Activated CD4-positive, alpha-beta memory T cell treated with anti-CD3 and anti-CD28 coated beads for 36 hours (primary cell): ENCODE measurements at regions of chr16 and their contacts with region 1.

Region 1: GRCh38 chr16:71610936-71611871 is 14.8 kb upstream of the MARVELD3 start:
- DNase-seq: peak; percentile 85
- H3K4me3 Mint-ChIP-seq: no peak overlapping the region
- H3K27ac Mint-ChIP-seq: no peak overlapping the region
- H3K4me1 Mint-ChIP-seq: peaks cover 9% of the 10 kb centered on the region
- H3K27me3 Mint-ChIP-seq: peaks cover 19% of the 10 kb centered on the region

Region 2: DNA sequence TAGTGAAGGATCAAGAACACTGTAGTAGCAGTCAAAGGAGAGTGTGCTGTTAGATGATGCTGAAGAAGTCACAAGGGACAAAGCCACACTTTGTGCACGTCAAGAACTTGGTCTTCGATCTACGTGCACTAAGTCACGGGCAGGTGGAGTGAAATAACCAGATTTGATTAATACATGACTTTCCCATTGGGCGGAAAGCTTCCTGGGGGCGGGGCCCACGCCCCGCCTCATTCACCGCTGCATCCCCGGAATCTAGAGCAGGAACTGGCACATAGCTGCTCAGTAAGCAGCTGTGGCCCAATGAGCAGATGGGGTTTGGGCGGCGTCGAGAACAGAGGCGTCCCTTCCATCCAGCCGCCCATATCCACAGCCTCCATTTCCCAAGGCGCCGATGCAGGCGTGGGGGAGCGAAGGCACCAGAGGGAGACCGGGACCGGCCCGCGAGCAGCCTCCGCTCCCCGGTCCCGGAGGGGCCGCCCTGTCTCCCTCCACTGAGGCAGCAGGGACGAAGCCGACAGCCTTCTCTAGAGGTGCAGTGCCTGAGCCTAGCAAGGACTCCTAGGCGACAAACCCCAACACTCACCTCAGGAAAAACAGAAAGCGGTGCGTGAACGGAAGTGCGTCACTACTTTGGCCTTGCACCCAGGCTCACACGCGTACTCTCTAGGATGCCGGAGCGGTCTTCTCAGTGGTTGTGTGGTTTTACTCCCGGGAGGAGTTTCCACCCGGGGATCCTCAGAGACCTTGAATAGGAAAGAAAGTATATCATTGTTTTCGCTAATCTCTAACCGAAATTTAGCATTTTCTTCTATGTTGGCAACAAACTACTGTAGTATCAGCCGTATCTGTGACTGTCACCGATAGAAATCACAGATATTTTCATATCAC is 127.0 kb before region 1 on chr16:
- CTCF ChIA-PET with region 1: interaction called, 5 read pairs
- POLR2A ChIA-PET with region 1: no interaction called
- intact Hi-C with region 1: loop called (anchors 2 kb)
- DNase-seq: peak; percentile 89
- H3K4me3 Mint-ChIP-seq: peak overlapping the region; percentile 81
- H3K27ac Mint-ChIP-seq: peak overlapping the region; percentile 74
- H3K4me1 Mint-ChIP-seq: peaks cover 13% of the 10 kb centered on the region
- H3K27me3 Mint-ChIP-seq: no peaks in the 10 kb centered on the region

Region 3: DNA sequence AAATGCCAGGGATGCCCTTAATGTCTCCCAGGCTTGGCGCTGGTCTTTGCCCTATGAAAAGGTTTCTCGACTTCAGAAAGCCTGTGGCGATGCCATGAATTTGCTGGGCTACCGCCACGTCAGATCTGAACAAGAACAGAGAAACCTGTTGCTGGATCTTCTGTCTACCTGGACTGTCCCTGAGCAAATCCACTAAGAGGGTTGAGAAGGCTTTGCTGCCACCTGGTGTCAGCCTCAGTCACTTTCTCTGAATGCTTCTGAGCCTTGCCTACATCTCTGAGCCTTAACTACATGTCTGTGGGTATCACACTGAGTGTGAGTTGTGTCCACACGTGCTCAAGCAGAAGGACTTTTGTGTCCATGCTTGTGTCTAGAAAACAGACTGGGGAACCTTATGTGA is 73.6 kb before region 1 on chr16:
- CTCF ChIA-PET with region 1: interaction called, 22 read pairs
- POLR2A ChIA-PET with region 1: no interaction called
- intact Hi-C with region 1: loop called (anchors 1 kb)
- DNase-seq: peak; percentile 58
- H3K4me3 Mint-ChIP-seq: no peak overlapping the region
- H3K27ac Mint-ChIP-seq: no peak overlapping the region
- H3K4me1 Mint-ChIP-seq: peaks cover 4% of the 10 kb centered on the region
- H3K27me3 Mint-ChIP-seq: peaks cover 6% of the 10 kb centered on the region

Region 4: GRCh38 chr16:71572497-71573116 is 38.6 kb before region 1 on chr16:
- CTCF ChIA-PET with region 1: interaction called, 97 read pairs
- POLR2A ChIA-PET with region 1: no interaction called
- intact Hi-C with region 1: no loop called
- DNase-seq: no peak
- H3K4me3 Mint-ChIP-seq: no peak overlapping the region
- H3K27ac Mint-ChIP-seq: no peak overlapping the region
- H3K4me1 Mint-ChIP-seq: no peaks in the 10 kb centered on the region
- H3K27me3 Mint-ChIP-seq: peaks cover 10% of the 10 kb centered on the region

Region 5: GRCh38 chr16:71622088-71622487 is 10.9 kb after region 1 on chr16:
- CTCF ChIA-PET with region 1: interaction called, 30 read pairs
- POLR2A ChIA-PET with region 1: no interaction called
- intact Hi-C with region 1: no loop called
- DNase-seq: no peak
- H3K4me3 Mint-ChIP-seq: no peak overlapping the region
- H3K27ac Mint-ChIP-seq: no peak overlapping the region
- H3K4me1 Mint-ChIP-seq: peaks cover 7% of the 10 kb centered on the region
- H3K27me3 Mint-ChIP-seq: peaks cover 5% of the 10 kb centered on the region

Region 6: DNA sequence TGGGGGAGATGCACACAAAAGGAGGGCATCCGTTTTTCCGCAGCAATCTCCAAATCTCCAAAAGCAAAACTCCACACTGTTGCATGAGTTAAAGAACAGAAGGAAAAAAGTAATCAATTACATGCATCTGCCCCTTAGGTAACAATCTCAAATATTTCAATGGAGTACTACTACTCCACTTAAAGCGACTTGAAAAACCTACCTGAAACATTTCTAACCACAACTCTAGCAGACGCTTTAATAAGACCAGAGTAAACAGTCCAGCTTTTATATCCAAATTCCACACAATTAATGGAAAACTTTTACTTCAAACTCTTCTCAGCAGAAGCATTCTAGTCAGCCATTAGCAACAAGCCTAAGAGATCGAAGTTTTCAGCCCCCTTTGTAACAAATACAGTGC is 167.6 kb after region 1 on chr16:
- CTCF ChIA-PET with region 1: no interaction called
- POLR2A ChIA-PET with region 1: no interaction called
- intact Hi-C with region 1: no loop called
- DNase-seq: no peak
- H3K4me3 Mint-ChIP-seq: no peak overlapping the region
- H3K27ac Mint-ChIP-seq: no peak overlapping the region
- H3K4me1 Mint-ChIP-seq: peaks cover 43% of the 10 kb centered on the region
- H3K27me3 Mint-ChIP-seq: no peaks in the 10 kb centered on the region